Naive thymus-derived CD4-positive, alpha-beta T cell (primary cell): ENCODE measurements at regions of chr10 and their contacts with region 1.

Region 1: DNA sequence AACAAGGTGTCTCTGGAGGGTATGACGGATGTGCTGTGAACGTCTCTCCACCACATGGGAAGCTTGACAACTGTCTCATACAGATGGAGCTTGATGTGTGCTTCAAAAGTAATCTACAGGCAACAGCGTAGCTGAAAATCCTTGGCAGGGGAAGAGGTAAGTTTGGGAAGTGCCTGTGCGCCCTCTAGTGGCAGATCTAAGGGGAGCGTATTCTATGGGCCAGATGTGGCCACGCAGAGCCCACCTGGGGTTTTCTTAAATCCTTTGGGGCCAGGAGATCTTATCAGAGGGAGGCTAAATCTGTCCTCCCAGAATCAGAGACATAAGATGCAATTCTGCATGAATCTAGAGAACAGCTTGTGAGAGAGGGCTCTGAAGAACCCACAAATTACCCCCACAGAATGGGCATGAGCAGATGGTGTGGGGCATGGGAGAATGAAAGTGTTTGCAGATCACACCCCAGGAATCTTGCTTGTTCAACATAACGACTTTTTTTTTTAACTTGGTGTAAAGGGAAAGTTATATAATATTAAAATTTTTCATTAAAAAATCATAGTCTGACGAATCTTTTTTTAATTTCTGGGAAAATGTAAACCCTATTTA is 91.2 kb upstream of the MPP7 start:
- DNase-seq: peak; percentile 36 to 70 (median 53)
- ATAC-seq: peak; percentile 87
- H3K4me3 ChIP-seq: no peak overlapping the region
- H3K4me3 Mint-ChIP-seq: no peak overlapping the region
- H3K27ac ChIP-seq: no peak overlapping the region
- H3K27ac Mint-ChIP-seq: peak overlapping the region in 2 of 9 donors; percentile 12 to 35
- H3K4me1 ChIP-seq: no peaks in the 10 kb centered on the region
- H3K4me1 Mint-ChIP-seq: peaks cover 0 to 6% (median 5%) of the 10 kb centered on the region in 7 donors
- H3K27me3 ChIP-seq: no peaks in the 10 kb centered on the region
- H3K27me3 Mint-ChIP-seq: peaks cover 0 to 6% (median 0%) of the 10 kb centered on the region in 5 donors

Region 2: GRCh38 chr10:27369880-27370279 is 1024.2 kb before region 1 on chr10:
- CTCF ChIA-PET with region 1: no interaction called
- POLR2A ChIA-PET with region 1: interaction called, 3 read pairs
- intact Hi-C with region 1: loop called in 1 of 2 experiments (anchors 1 kb)
- DNase-seq: peak in 2 of 9 donors; percentile 9 to 11
- ATAC-seq: no peak
- H3K4me3 ChIP-seq: no peak overlapping the region
- H3K4me3 Mint-ChIP-seq: no peak overlapping the region
- H3K27ac ChIP-seq: no peak overlapping the region
- H3K27ac Mint-ChIP-seq: no peak overlapping the region
- H3K4me1 ChIP-seq: no peaks in the 10 kb centered on the region
- H3K4me1 Mint-ChIP-seq: peaks cover 0 to 3% (median 0%) of the 10 kb centered on the region in 7 donors
- H3K27me3 ChIP-seq: no peaks in the 10 kb centered on the region
- H3K27me3 Mint-ChIP-seq: peaks cover 0 to 8% (median 4%) of the 10 kb centered on the region in 5 donors

Region 3: GRCh38 chr10:27558612-27559020 is 835.5 kb before region 1 on chr10:
- CTCF ChIA-PET with region 1: no interaction called
- POLR2A ChIA-PET with region 1: no interaction called
- intact Hi-C with region 1: loop called in 1 of 2 experiments (anchors 1 kb)
- DNase-seq: peak in 3 of 9 donors; percentile 10 to 25 (median 15)
- ATAC-seq: peak; percentile 63
- H3K4me3 ChIP-seq: no peak overlapping the region
- H3K4me3 Mint-ChIP-seq: no peak overlapping the region
- H3K27ac ChIP-seq: no peak overlapping the region
- H3K27ac Mint-ChIP-seq: peak overlapping the region in 1 of 9 donors; percentile 36
- H3K4me1 ChIP-seq: peaks cover 0 to under 1% of the 10 kb centered on the region in 2 donors
- H3K4me1 Mint-ChIP-seq: peaks cover 0 to 4% (median 0%) of the 10 kb centered on the region in 7 donors
- H3K27me3 ChIP-seq: no peaks in the 10 kb centered on the region
- H3K27me3 Mint-ChIP-seq: peaks cover 0 to 16% (median 0%) of the 10 kb centered on the region in 5 donors

Region 4: GRCh38 chr10:27783660-27784059 is 610.4 kb before region 1 on chr10:
- CTCF ChIA-PET with region 1: no interaction called
- POLR2A ChIA-PET with region 1: no interaction called
- intact Hi-C with region 1: loop called in 1 of 2 experiments (anchors 1 kb)
- DNase-seq: peak in 6 of 9 donors; percentile 8 to 39 (median 20)
- ATAC-seq: peak; percentile 77
- H3K4me3 ChIP-seq: no peak overlapping the region
- H3K4me3 Mint-ChIP-seq: no peak overlapping the region
- H3K27ac ChIP-seq: no peak overlapping the region
- H3K27ac Mint-ChIP-seq: no peak overlapping the region
- H3K4me1 ChIP-seq: no peaks in the 10 kb centered on the region
- H3K4me1 Mint-ChIP-seq: no peaks in the 10 kb centered on the region
- H3K27me3 ChIP-seq: no peaks in the 10 kb centered on the region
- H3K27me3 Mint-ChIP-seq: peaks cover 4 to 26% (median 15%) of the 10 kb centered on the region in 5 donors

Region 5: GRCh38 chr10:28250782-28251181 is 143.3 kb before region 1 on chr10:
- CTCF ChIA-PET with region 1: interaction called, 6 read pairs
- POLR2A ChIA-PET with region 1: interaction called, 4 read pairs
- intact Hi-C with region 1: loop called in 1 of 2 experiments (anchors 1 kb)
- DNase-seq: peak in 5 of 9 donors; percentile 24 to 47 (median 43)
- ATAC-seq: peak; percentile 57
- H3K4me3 ChIP-seq: no peak overlapping the region
- H3K4me3 Mint-ChIP-seq: no peak overlapping the region
- H3K27ac ChIP-seq: no peak overlapping the region
- H3K27ac Mint-ChIP-seq: peak overlapping the region in 5 of 9 donors; percentile 3 to 80 (median 29)
- H3K4me1 ChIP-seq: no peaks in the 10 kb centered on the region
- H3K4me1 Mint-ChIP-seq: peaks cover 10 to 72% (median 50%) of the 10 kb centered on the region in 7 donors
- H3K27me3 ChIP-seq: no peaks in the 10 kb centered on the region
- H3K27me3 Mint-ChIP-seq: peaks cover 0 to 8% (median 0%) of the 10 kb centered on the region in 5 donors